K562 (cell line): ENCODE measurements at regions of chr11 and their contacts with region 1.

Region 1: GRCh38 chr11:64734811-64735724 is 8.9 kb downstream of the RASGRP2 start:
- DNase-seq: no peak
- ATAC-seq: no peak; the same call in 2 of the 3 replicates
- H3K4me3 ChIP-seq: no peak overlapping the region
- H3K27ac ChIP-seq: no peak overlapping the region
- H3K4me1 ChIP-seq: peaks cover 0 to 21% of the 10 kb centered on the region in 2 experiments; a peak in 4 of 5 replicates
- H3K27me3 ChIP-seq: peaks cover 0 to 3% of the 10 kb centered on the region in 2 experiments; a peak in 2 of 5 replicates
- CTCF ChIP-seq: no peak
- EP300 ChIP-seq: no peak
- POLR2A ChIP-seq: no peak
- RAD21 ChIP-seq: no peak

Region 2: GRCh38 chr11:64659417-64660144 is 75.5 kb before region 1 on chr11:
- CTCF ChIA-PET with region 1: no interaction called
- POLR2A ChIA-PET with region 1: no interaction called
- in situ Hi-C with region 1: loop called (anchors 5 kb)
- intact Hi-C with region 1: loop called (anchors 5 kb)
- DNase-seq: peak; percentile 73 to 87 (median 79)
- ATAC-seq: peak; percentile 88
- H3K4me3 ChIP-seq: no peak overlapping the region
- H3K27ac ChIP-seq: peak overlapping the region; percentile 82
- H3K4me1 ChIP-seq: peaks cover 38 to 42% of the 10 kb centered on the region in 2 experiments
- H3K27me3 ChIP-seq: no peaks in the 10 kb centered on the region
- CTCF ChIP-seq: peak in 2 of 3 experiments; percentile 37 to 54; a peak in 3 of 6 replicates
- EP300 ChIP-seq: peak; percentile 79
- POLR2A ChIP-seq: peak; percentile 60; the same call in 1 of the 2 replicates
- RAD21 ChIP-seq: peak; percentile 20 to 61; a peak in 3 of 4 replicates